Panc1 (cell line): ENCODE measurements at regions of chr19 and their contacts with region 1.

Region 1: GRCh38 chr19:34313188-34313587 is 51.8 kb upstream of the GPI start:
- DNase-seq: no peak
- ATAC-seq: no peak
- H3K4me3 ChIP-seq: no peak overlapping the region
- H3K27ac ChIP-seq: no peak overlapping the region
- H3K4me1 ChIP-seq: 0 out of 2 replicates have a peak, but pooled peaks cover 5% of the 10 kb centered on the region
- H3K27me3 ChIP-seq: no peaks in the 10 kb centered on the region
- CTCF ChIP-seq: no peak

Region 2: GRCh38 chr19:34323433-34324204 is 10.4 kb after region 1 on chr19:
- CTCF ChIA-PET with region 1: interaction called, 11 read pairs
- POLR2A ChIA-PET with region 1: interaction called, 4 read pairs
- in situ Hi-C with region 1: no loop called
- intact Hi-C with region 1: no loop called
- DNase-seq: no peak
- ATAC-seq: peak; percentile 26; the same call in 1 of the 2 replicates
- H3K4me3 ChIP-seq: no peak overlapping the region
- H3K27ac ChIP-seq: no peak overlapping the region
- H3K4me1 ChIP-seq: no peaks in the 10 kb centered on the region
- H3K27me3 ChIP-seq: no peaks in the 10 kb centered on the region
- CTCF ChIP-seq: no peak

Region 3: DNA sequence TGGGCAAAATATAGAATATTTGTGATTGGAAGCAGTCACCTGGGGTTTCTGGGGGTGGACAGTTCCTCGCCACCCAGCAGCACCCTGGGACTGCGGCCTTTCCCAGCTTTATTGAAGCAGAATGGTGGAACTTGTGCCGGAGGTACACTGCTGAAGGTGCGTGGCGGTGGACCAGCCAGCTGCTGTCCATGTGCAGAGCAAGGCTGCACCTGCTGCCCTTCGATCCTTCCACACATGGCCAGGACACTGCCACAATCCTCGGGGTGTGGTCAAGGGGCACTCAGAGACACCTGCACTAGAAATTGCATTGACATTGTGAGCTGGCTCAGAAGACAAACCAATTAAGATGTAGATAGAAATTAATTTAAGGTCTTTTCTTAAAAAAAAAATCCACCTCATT is 40.4 kb after region 1 on chr19:
- CTCF ChIA-PET with region 1: no interaction called
- POLR2A ChIA-PET with region 1: interaction called, 12 read pairs
- in situ Hi-C with region 1: no loop called
- intact Hi-C with region 1: no loop called
- DNase-seq: no peak
- ATAC-seq: no peak
- H3K4me3 ChIP-seq: no peak overlapping the region
- H3K27ac ChIP-seq: no peak overlapping the region
- H3K4me1 ChIP-seq: peaks cover 4% of the 10 kb centered on the region
- H3K27me3 ChIP-seq: no peaks in the 10 kb centered on the region
- CTCF ChIP-seq: no peak